Mucosa of descending colon (tissue), 3 donors: ENCODE measurements at regions of chr11 and their contacts with region 1.

Region 1: GRCh38 chr11:74780248-74781005 is 31.8 kb downstream of the RNF169 start:
- DNase-seq: no peak
- ATAC-seq: no peak
- H3K4me3 ChIP-seq: no peak overlapping the region
- H3K4me1 ChIP-seq: peaks cover 11% of the 10 kb centered on the region
- CTCF ChIP-seq: no peak

Region 2: GRCh38 chr11:74826901-74827300 is 46.5 kb after region 1 on chr11:
- intact Hi-C with region 1: loop called in 1 of 2 experiments (anchors 2 kb)
- DNase-seq: no peak
- ATAC-seq: no peak
- H3K4me3 ChIP-seq: no peak overlapping the region
- H3K4me1 ChIP-seq: no peaks in the 10 kb centered on the region
- CTCF ChIP-seq: no peak